ENCODE measurements at regions of chr3 and their contacts with region 1.

Region 1: GRCh38 chr3:39288300-39288808 is 8.5 kb upstream of the CX3CR1 start:
- DNase-seq: peak; percentile 95
- ATAC-seq: peak; percentile 97
- H3K4me3 ChIP-seq: no peak overlapping the region
- H3K27ac ChIP-seq: no peak overlapping the region
- H3K4me1 ChIP-seq: peaks cover 17% of the 10 kb centered on the region
- H3K27me3 ChIP-seq: no peaks in the 10 kb centered on the region
- CTCF ChIP-seq: peak; percentile 93 to 99 (median 99); a peak in 5 of 6 replicates
- EP300 ChIP-seq: peak in 1 of 2 experiments; percentile 65; a peak in 2 of 4 replicates
- POLR2A ChIP-seq: no peak
- RAD21 ChIP-seq: peak; percentile 99

Region 2: GRCh38 chr3:38816026-38816425 is 472.3 kb before region 1 on chr3 and contains the start of gene SCN10A:
- CTCF ChIA-PET with region 1: no interaction called
- POLR2A ChIA-PET with region 1: no interaction called
- RAD21 ChIA-PET with region 1: no interaction called
- SMC1A ChIA-PET with region 1: no interaction called
- in situ Hi-C with region 1: no loop called
- intact Hi-C with region 1: no loop called
- DNase-seq: no peak
- ATAC-seq: no peak
- H3K4me3 ChIP-seq: no peak within 1 kb of the TSS
- H3K27ac ChIP-seq: no peak within 1 kb of the TSS
- H3K4me1 ChIP-seq: no peaks in the 10 kb centered on the region
- H3K27me3 ChIP-seq: no peaks in the 10 kb centered on the region; a peak in 1 of 4 replicates
- CTCF ChIP-seq: no peak
- EP300 ChIP-seq: no peak
- POLR2A ChIP-seq: no peak
- RAD21 ChIP-seq: no peak
- polyA plus RNA-seq, gene SCN10A: not detected

Region 3: DNA sequence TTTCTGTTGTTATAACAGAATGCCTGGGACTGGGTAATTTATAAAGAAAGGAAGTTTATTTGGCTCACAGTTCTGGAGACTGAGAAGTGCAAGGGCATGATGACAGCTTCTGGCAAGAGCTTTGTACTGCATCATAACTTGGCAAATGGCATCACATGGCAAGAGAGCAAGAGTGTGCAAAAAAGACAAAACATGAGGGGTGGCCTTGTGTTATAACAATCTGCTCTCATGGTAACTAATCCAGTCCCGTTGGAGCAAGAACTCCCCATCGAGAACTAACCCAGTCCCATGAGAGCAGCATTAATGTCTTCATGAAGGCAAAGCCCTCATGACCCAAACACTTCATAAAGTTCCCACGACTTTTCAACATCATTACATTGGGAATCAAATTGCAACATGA is 259.8 kb before region 1 on chr3:
- CTCF ChIA-PET with region 1: interaction called, 10 read pairs
- POLR2A ChIA-PET with region 1: no interaction called
- RAD21 ChIA-PET with region 1: interaction called, 5 read pairs
- SMC1A ChIA-PET with region 1: interaction called, 3 read pairs
- in situ Hi-C with region 1: no loop called
- intact Hi-C with region 1: no loop called
- DNase-seq: no peak
- ATAC-seq: no peak
- H3K4me3 ChIP-seq: no peak overlapping the region
- H3K27ac ChIP-seq: no peak overlapping the region
- H3K4me1 ChIP-seq: no peaks in the 10 kb centered on the region
- H3K27me3 ChIP-seq: peaks cover 0 to 2% of the 10 kb centered on the region in 2 experiments; a peak in 1 of 4 replicates
- CTCF ChIP-seq: no peak
- EP300 ChIP-seq: no peak
- POLR2A ChIP-seq: no peak
- RAD21 ChIP-seq: no peak

Region 4: DNA sequence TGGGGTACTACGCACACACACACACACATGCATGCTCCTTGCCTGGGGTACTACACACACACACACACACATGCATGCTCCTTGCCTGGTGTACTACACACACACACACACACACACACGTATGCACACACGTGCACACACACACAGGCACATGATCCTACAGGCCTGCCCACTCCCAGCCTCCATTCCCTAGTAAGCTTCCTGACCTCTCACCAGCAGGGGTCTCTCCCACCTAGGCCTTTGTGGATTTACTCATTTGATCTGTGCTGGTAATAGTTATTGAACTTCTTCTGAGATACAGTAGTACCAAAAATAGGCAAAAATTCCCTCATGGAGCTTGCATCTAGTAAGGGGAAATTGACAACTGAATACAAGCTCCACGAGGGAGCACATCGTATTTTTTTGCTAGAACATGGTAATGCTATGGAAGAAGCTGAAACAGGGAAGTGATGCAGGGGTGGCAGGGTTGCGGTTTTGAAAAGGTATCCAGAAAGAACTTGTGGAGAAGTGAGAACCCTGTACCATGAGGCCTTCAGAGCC is 161.8 kb before region 1 on chr3:
- CTCF ChIA-PET with region 1: interaction called, 47 read pairs
- POLR2A ChIA-PET with region 1: interaction called, 3 read pairs
- RAD21 ChIA-PET with region 1: interaction called, 40 read pairs
- SMC1A ChIA-PET with region 1: interaction called, 45 read pairs
- in situ Hi-C with region 1: no loop called
- intact Hi-C with region 1: no loop called
- DNase-seq: no peak
- ATAC-seq: peak; percentile 67
- H3K4me3 ChIP-seq: no peak overlapping the region
- H3K27ac ChIP-seq: no peak overlapping the region
- H3K4me1 ChIP-seq: peaks cover 25% of the 10 kb centered on the region
- H3K27me3 ChIP-seq: no peaks in the 10 kb centered on the region
- CTCF ChIP-seq: peak; percentile 37 to 46 (median 44); a peak in 5 of 6 replicates
- EP300 ChIP-seq: no peak
- POLR2A ChIP-seq: no peak
- RAD21 ChIP-seq: peak; percentile 73

Region 5: DNA sequence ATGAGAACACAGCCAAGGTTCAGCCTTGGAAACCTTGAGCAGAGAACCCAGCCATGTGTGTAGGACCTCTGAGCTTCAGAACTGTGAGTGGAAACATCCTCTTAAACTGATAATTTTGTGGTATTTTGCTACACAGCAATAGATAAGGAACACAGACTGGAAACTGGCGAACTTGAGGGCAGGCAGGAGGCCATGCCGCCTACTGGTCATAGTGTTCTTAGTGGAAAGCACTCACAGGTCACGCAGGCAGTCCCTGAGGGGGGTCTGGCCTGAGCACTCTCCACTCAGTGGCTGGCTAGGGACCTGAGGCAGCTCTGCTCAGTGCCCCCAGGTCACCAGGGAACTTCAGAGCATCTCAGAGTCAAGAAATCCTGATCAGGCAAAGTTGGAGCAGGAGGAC is 86.3 kb before region 1 on chr3:
- CTCF ChIA-PET with region 1: interaction called, 756 read pairs
- POLR2A ChIA-PET with region 1: interaction called, 4 read pairs
- RAD21 ChIA-PET with region 1: interaction called, 456 read pairs
- SMC1A ChIA-PET with region 1: interaction called, 648 read pairs
- in situ Hi-C with region 1: no loop called
- intact Hi-C with region 1: no loop called
- DNase-seq: no peak
- ATAC-seq: peak; percentile 23
- H3K4me3 ChIP-seq: no peak overlapping the region
- H3K27ac ChIP-seq: no peak overlapping the region
- H3K4me1 ChIP-seq: no peaks in the 10 kb centered on the region; the same call in 1 of the 2 replicates
- H3K27me3 ChIP-seq: 0 out of 4 replicates have a peak, but pooled peaks cover 0 to 1% of the 10 kb centered on the region in 2 experiments
- CTCF ChIP-seq: no peak
- EP300 ChIP-seq: no peak
- POLR2A ChIP-seq: no peak
- RAD21 ChIP-seq: no peak

Region 6: GRCh38 chr3:39255503-39256325 is 32.6 kb before region 1 on chr3:
- CTCF ChIA-PET with region 1: interaction called, 49 read pairs
- POLR2A ChIA-PET with region 1: interaction called, 4 read pairs
- RAD21 ChIA-PET with region 1: interaction called, 12 read pairs
- SMC1A ChIA-PET with region 1: interaction called, 25 read pairs
- in situ Hi-C with region 1: no loop called
- intact Hi-C with region 1: loop called (anchors 1 kb)
- DNase-seq: peak; percentile 90
- ATAC-seq: peak; percentile 97
- H3K4me3 ChIP-seq: peak overlapping the region; percentile 39; the same call in 1 of the 2 replicates
- H3K27ac ChIP-seq: peak overlapping the region; percentile 93
- H3K4me1 ChIP-seq: peaks cover 30% of the 10 kb centered on the region
- H3K27me3 ChIP-seq: no peaks in the 10 kb centered on the region
- CTCF ChIP-seq: no peak
- EP300 ChIP-seq: peak; percentile 61 to 91; a peak in 3 of 4 replicates
- POLR2A ChIP-seq: no peak
- RAD21 ChIP-seq: no peak

Region 7: DNA sequence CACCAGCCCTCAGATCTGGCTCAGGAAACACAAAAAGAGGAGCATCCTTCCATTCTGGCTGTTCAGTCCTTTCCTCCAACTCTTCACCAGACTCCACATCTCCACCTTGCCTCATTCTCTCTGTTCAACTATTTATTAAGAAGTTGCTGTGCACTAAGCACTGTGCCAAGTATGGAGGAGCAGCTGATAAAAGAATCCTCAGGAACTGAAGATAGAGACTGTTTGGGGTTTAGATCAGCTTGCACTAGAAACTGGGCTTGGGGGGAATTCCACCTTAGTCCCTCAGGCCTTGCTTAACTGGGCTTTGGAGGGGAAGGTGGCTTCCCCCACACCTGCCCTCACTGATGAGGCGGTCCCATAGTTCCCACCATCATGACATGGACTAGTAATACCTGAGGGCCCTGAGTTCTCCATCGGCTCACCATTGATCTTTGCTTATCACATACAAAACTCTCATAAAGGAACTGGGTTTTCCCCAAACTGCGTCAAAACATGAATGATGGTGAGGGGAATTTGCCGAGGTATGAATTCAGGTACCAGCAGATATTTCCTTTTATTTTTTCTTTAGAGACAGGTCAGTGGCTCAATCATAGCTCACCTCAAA is 39.5 kb after region 1 on chr3:
- CTCF ChIA-PET with region 1: interaction called, 43 read pairs
- POLR2A ChIA-PET with region 1: interaction called, 3 read pairs
- RAD21 ChIA-PET with region 1: interaction called, 8 read pairs
- SMC1A ChIA-PET with region 1: interaction called, 15 read pairs
- in situ Hi-C with region 1: no loop called
- intact Hi-C with region 1: no loop called
- DNase-seq: peak; percentile 67
- ATAC-seq: peak; percentile 87
- H3K4me3 ChIP-seq: no peak overlapping the region
- H3K27ac ChIP-seq: peak overlapping the region; percentile 84
- H3K4me1 ChIP-seq: peaks cover 23% of the 10 kb centered on the region
- H3K27me3 ChIP-seq: no peaks in the 10 kb centered on the region
- CTCF ChIP-seq: no peak
- EP300 ChIP-seq: peak in 1 of 2 experiments; percentile 63; a peak in 2 of 4 replicates
- POLR2A ChIP-seq: no peak
- RAD21 ChIP-seq: no peak

Region 8: GRCh38 chr3:39388741-39389248 is 100.4 kb after region 1 on chr3:
- CTCF ChIA-PET with region 1: interaction called, 32 read pairs
- POLR2A ChIA-PET with region 1: interaction called, 3 read pairs
- RAD21 ChIA-PET with region 1: interaction called, 5 read pairs
- SMC1A ChIA-PET with region 1: interaction called, 9 read pairs
- in situ Hi-C with region 1: no loop called
- intact Hi-C with region 1: no loop called
- DNase-seq: peak; percentile 89
- ATAC-seq: peak; percentile 74
- H3K4me3 ChIP-seq: peak overlapping the region; percentile 49
- H3K27ac ChIP-seq: peak overlapping the region; percentile 85
- H3K4me1 ChIP-seq: peaks cover 24% of the 10 kb centered on the region
- H3K27me3 ChIP-seq: no peaks in the 10 kb centered on the region
- CTCF ChIP-seq: no peak
- EP300 ChIP-seq: no peak
- POLR2A ChIP-seq: no peak
- RAD21 ChIP-seq: no peak

Region 9: GRCh38 chr3:39485547-39485946 is 197.2 kb after region 1 on chr3:
- CTCF ChIA-PET with region 1: no interaction called
- POLR2A ChIA-PET with region 1: no interaction called
- RAD21 ChIA-PET with region 1: no interaction called
- SMC1A ChIA-PET with region 1: no interaction called
- in situ Hi-C with region 1: no loop called
- intact Hi-C with region 1: no loop called
- DNase-seq: no peak
- ATAC-seq: no peak
- H3K4me3 ChIP-seq: no peak overlapping the region
- H3K27ac ChIP-seq: no peak overlapping the region
- H3K4me1 ChIP-seq: no peaks in the 10 kb centered on the region
- H3K27me3 ChIP-seq: no peaks in the 10 kb centered on the region; a peak in 1 of 4 replicates
- CTCF ChIP-seq: no peak
- EP300 ChIP-seq: no peak
- POLR2A ChIP-seq: no peak
- RAD21 ChIP-seq: no peak